Activated CD4-positive, alpha-beta T cell treated with anti-CD3 and anti-CD28 coated beads for 36 hours (primary cell): ENCODE measurements at regions of chr1 and their contacts with region 1.

Region 1: GRCh38 chr1:160098852-160099561 is 588 bp upstream of the IGSF8 start:
- DNase-seq: peak; percentile 100
- ATAC-seq: peak; percentile 88
- H3K4me3 Mint-ChIP-seq: peak overlapping the region; percentile 65
- H3K27ac Mint-ChIP-seq: peak overlapping the region; percentile 65
- H3K4me1 Mint-ChIP-seq: peaks cover 44% of the 10 kb centered on the region
- H3K27me3 Mint-ChIP-seq: no peaks in the 10 kb centered on the region

Region 2: DNA sequence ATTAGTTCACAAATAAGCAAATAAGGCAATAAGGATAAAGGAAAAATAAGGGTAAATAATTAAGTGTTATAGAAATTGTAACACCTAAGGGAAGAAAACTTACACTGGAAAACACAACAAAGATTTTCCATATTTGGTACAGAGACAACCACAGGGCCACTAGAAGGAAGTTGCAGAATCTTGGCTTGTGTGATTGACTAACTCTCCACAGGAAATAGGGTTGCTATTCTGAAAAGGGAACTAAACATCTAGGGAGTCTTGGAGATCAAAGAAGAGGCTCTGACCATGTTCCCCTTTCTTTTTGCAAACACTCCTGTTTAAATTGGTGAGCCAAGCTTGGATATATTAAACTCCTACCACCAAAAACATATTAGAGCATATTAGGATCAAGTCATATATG is 452.3 kb before region 1 on chr1:
- CTCF ChIA-PET with region 1: no interaction called
- POLR2A ChIA-PET with region 1: no interaction called
- intact Hi-C with region 1: no loop called
- DNase-seq: no peak
- ATAC-seq: no peak
- H3K4me3 Mint-ChIP-seq: no peak overlapping the region
- H3K27ac Mint-ChIP-seq: no peak overlapping the region
- H3K4me1 Mint-ChIP-seq: no peaks in the 10 kb centered on the region
- H3K27me3 Mint-ChIP-seq: peaks cover 11% of the 10 kb centered on the region

Region 3: GRCh38 chr1:159854693-159855192 is 244.3 kb before region 1 on chr1:
- CTCF ChIA-PET with region 1: no interaction called
- POLR2A ChIA-PET with region 1: no interaction called
- intact Hi-C with region 1: loop called in 1 of 2 experiments (anchors 5 kb)
- DNase-seq: peak; percentile 87
- ATAC-seq: peak; percentile 96
- H3K4me3 Mint-ChIP-seq: peak overlapping the region; percentile 75
- H3K27ac Mint-ChIP-seq: peak overlapping the region; percentile 58
- H3K4me1 Mint-ChIP-seq: peaks cover 10% of the 10 kb centered on the region
- H3K27me3 Mint-ChIP-seq: no peaks in the 10 kb centered on the region

Region 4: DNA sequence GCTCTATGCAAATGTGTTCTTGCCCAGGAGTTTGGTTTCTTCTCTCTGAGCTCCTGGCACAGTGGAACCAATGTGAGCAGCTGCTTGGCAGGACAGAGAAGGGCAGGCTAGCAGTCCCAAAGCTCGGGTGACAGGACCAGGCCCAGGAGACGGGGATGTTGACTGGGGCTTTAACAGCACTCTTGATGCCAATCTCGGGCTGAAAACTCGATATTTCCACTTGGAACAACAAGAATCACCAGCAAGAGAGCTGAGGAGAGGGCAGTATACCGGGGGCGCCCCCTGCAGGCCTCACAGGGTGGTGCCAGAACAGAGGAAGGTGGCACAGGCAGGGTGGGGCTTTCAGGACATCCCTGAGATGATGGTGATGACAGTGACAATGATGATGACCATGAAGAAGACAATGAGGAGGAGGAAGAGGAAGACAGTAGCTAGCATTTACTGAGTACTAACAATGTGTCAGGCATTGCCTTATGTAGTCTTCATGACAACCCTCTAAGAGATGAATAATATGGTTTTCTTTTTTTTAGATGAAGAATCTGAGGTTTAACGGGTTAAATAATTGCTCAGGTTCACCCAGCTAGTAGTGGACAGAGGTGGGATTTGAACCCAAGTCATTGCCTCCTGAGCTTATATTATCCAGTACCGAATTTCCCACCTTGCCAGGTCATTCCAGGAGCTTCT is 20.4 kb before region 1 on chr1:
- CTCF ChIA-PET with region 1: interaction called, 33 read pairs
- POLR2A ChIA-PET with region 1: interaction called, 5 read pairs
- intact Hi-C with region 1: no loop called
- DNase-seq: peak; percentile 84
- ATAC-seq: peak; percentile 93
- H3K4me3 Mint-ChIP-seq: no peak overlapping the region
- H3K27ac Mint-ChIP-seq: no peak overlapping the region
- H3K4me1 Mint-ChIP-seq: peaks cover 18% of the 10 kb centered on the region
- H3K27me3 Mint-ChIP-seq: peaks cover 48% of the 10 kb centered on the region

Region 5: GRCh38 chr1:160193091-160193819 is 94.2 kb after region 1 on chr1:
- CTCF ChIA-PET with region 1: interaction called, 4 read pairs
- POLR2A ChIA-PET with region 1: no interaction called
- intact Hi-C with region 1: loop called (anchors 1 to 2 kb)
- DNase-seq: peak; percentile 90
- ATAC-seq: peak; percentile 89
- H3K4me3 Mint-ChIP-seq: no peak overlapping the region
- H3K27ac Mint-ChIP-seq: no peak overlapping the region
- H3K4me1 Mint-ChIP-seq: no peaks in the 10 kb centered on the region
- H3K27me3 Mint-ChIP-seq: no peaks in the 10 kb centered on the region

Region 6: GRCh38 chr1:160261893-160262794 is 163.1 kb after region 1 on chr1 and contains the start of gene DCAF8:
- CTCF ChIA-PET with region 1: interaction called, 6 read pairs
- POLR2A ChIA-PET with region 1: interaction called, 8 read pairs
- intact Hi-C with region 1: loop called (anchors 1 kb)
- DNase-seq: peak; percentile 99
- ATAC-seq: peak; percentile 88
- H3K4me3 Mint-ChIP-seq: peak within 1 kb of the TSS; percentile 100
- H3K27ac Mint-ChIP-seq: peak within 1 kb of the TSS; percentile 99
- H3K4me1 Mint-ChIP-seq: peaks cover 44% of the 10 kb centered on the region
- H3K27me3 Mint-ChIP-seq: no peaks in the 10 kb centered on the region
- total RNA-seq, gene DCAF8: 116 to 135 TPM

Region 7: DNA sequence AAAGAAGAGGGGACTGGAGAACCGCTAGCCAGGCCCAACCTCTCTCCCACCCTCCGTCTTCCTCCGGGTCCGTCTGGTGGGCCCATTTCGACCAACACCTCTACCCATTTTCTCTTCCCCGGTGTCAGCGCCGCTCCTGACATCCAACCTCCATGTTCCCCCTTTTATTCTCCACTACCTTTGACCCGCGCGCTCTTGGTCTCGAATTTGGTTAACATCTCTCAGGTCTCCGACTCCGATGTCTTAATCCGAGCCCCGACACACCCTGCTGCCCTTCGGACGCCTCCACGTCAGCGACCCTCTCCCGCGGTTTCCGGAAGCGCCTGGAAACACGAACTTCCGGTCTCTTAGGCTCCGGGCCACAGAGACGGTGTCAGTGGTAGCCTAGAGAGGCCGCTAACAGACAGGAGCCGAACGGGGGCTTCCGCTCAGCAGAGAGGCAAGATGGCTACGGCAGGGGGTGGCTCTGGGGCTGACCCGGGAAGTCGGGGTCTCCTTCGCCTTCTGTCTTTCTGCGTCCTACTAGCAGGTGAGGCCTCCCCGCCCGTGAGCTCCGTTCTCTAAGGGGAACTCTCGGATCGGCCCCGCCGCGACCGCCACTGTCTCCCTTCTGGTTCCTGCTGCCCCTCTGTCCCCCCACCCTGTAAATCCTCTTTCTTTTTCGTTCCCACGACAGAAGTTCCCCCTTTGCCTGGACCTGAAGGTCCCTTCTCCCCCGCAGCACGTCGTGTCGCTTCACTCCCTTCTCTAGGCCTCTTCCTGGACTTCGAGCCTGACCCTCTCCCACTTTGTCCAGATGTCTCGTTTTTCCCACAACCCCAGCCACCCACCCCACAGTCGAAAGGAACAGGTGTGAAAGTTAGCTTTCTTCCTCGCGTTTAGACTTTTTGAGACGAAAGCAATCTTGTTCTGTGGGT is 244.2 kb after region 1 on chr1 and contains the starts of genes COPA and NCSTN:
- CTCF ChIA-PET with region 1: interaction called, 3 read pairs
- POLR2A ChIA-PET with region 1: no interaction called
- intact Hi-C with region 1: loop called in 1 of 2 experiments (anchors 1 kb)
- DNase-seq: peak; percentile 94
- ATAC-seq: peak; percentile 99
- H3K4me3 Mint-ChIP-seq: peak within 1 kb of the TSS; percentile 100
- H3K27ac Mint-ChIP-seq: peak within 1 kb of the TSS; percentile 100
- H3K4me1 Mint-ChIP-seq: peaks cover 31% of the 10 kb centered on the region
- H3K27me3 Mint-ChIP-seq: no peaks in the 10 kb centered on the region
- total RNA-seq, gene COPA: 125 to 148 TPM
- total RNA-seq, gene NCSTN: 47.0 to 51.5 TPM